Astrocyte of the cerebellum (primary cell): ENCODE measurements at regions of chr11 and their contacts with region 1.

Region 1: DNA sequence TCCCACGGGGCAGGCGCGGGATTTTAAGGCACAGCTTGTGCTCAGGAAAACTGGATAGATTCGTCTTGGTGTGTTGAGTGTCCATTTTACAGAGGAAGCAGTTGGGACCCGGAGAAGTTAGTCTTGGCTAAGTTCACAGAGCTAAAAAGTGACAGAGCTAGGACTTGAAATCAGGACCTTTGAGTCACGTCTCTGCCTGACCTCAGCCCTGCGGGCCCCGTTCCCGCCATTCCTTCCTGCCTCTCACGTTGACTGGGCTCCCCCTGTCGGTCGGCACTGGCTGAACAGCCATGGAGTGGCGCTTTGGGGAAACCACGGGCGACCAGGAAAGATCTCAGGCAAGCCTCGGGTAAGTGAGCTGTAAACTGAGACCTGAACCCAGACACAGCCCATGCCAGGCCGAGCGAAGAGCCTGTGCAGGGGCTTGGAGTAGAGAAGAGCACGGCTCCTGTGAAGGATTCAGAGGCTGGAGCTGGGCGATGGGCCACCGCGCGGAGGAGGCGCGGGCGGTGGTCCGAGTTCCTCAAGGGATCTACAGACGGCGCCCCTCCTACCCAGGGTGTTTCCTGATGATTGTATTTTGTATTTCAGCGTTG is 54.1 kb downstream of the WNT11 start:
- DNase-seq: peak; percentile 36
- H3K4me3 ChIP-seq: peak overlapping the region; percentile 15
- CTCF ChIP-seq: peak; percentile 70

Region 2: GRCh38 chr11:75924966-75925784 is 227.0 kb before region 1 on chr11:
- in situ Hi-C with region 1: loop called (anchors 25 kb)
- DNase-seq: no peak
- H3K4me3 ChIP-seq: no peak overlapping the region
- CTCF ChIP-seq: no peak

Region 3: GRCh38 chr11:76062733-76063132 is 89.5 kb before region 1 on chr11:
- in situ Hi-C with region 1: no loop called
- DNase-seq: no peak
- H3K4me3 ChIP-seq: no peak overlapping the region
- CTCF ChIP-seq: no peak